ENCODE measurements at regions of chrX and their contacts with region 1.

Region 1: GRCh38 chrX:119685225-119686066 is 7.5 kb downstream of the SEPTIN6 start:
- DNase-seq: no peak
- ATAC-seq: peak; percentile 53
- H3K4me3 Mint-ChIP-seq: peak overlapping the region; percentile 98
- H3K27ac Mint-ChIP-seq: peak overlapping the region; percentile 98
- H3K4me1 Mint-ChIP-seq: peaks cover 54% of the 10 kb centered on the region
- H3K27me3 Mint-ChIP-seq: no peaks in the 10 kb centered on the region

Region 2: DNA sequence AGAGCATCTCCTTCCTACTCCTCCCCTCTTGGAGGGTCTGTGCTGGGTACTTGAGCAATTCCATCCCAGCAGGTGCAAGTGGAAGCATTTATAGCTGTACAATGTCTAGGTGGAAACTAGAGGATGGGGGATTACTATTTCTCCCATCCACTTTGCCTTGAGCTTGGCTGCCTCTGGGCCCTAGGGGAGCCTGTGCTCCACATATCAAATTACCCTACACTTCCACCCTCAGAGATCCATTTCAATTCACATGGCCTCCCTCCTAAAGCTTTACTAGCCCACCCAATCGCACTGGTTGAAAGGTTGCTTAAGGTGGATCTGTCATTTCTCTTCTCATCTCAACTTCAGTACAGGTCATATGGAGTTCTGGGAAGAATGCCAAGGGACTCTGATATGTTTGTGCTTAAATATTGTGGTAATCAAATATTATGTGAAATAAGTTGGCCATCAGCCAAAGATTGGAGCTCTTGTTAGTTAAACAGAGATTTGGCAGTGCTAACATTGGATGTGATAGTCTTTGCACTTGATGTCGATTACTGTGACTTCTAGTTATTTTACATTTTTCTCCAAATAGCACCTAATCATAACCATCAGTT is 13.1 kb before region 1 on chrX:
- POLR2A ChIA-PET with region 1: interaction called, 191 read pairs
- DNase-seq: no peak
- ATAC-seq: no peak
- H3K4me3 Mint-ChIP-seq: no peak overlapping the region
- H3K27ac Mint-ChIP-seq: peak overlapping the region; percentile 51
- H3K4me1 Mint-ChIP-seq: peaks cover 22% of the 10 kb centered on the region
- H3K27me3 Mint-ChIP-seq: no peaks in the 10 kb centered on the region

Region 3: GRCh38 chrX:119729408-119730201 is 44.2 kb after region 1 on chrX:
- POLR2A ChIA-PET with region 1: interaction called, 16 read pairs
- DNase-seq: peak; percentile 49
- ATAC-seq: no peak
- H3K4me3 Mint-ChIP-seq: no peak overlapping the region
- H3K27ac Mint-ChIP-seq: no peak overlapping the region
- H3K4me1 Mint-ChIP-seq: peaks cover 10% of the 10 kb centered on the region
- H3K27me3 Mint-ChIP-seq: no peaks in the 10 kb centered on the region

Measured in activated naive CD8-positive, alpha-beta T cell treated with anti-CD3 and anti-CD28 coated beads, Interleukin-2, amount 10 ng/mL, durations not matched to agents 7 days and 5 days (primary cell).